Right cardiac atrium (tissue), 5 donors: ENCODE measurements at regions of chr16 and their contacts with region 1.

Region 1: DNA sequence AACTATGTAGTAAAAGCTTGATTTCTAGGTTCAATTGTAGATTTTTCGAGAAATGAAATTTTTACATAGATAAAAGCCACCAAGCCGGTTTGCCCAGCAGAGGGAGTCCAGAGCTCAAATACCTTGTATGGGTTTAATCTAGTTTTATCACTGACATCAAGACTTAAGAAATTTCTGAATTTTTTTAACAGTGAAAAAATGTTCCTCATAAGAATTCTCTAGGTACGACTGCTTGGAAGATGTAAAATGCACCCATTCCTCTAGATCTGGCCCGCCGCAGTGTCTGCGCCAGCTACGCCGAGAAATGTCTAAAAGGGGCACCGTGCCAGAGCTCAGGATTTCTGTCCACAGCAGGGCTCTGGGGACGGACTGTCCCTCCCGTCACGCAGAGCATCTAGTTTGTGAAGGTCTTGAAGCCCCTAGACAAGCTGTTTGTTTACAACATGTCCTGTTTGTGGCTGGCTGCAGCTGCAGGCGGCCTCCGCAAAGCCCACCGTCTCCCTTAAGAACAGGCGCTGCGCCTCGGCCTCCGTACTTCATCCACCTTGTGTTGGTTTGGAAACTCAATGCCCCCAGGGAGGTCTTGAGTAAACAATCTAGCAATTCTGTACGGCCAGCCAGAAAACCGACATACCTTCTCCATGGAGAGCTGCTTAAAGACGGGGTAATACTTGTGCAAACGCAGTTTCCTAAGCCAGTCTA is 24.8 kb downstream of the MAP1LC3B start:
- DNase-seq: peak in 2 of 3 donors; percentile 50 to 82
- ATAC-seq: no peak
- H3K4me3 ChIP-seq: no peak overlapping the region
- H3K27ac ChIP-seq: no peak overlapping the region
- H3K4me1 ChIP-seq: no peaks in the 10 kb centered on the region
- H3K27me3 ChIP-seq: no peaks in the 10 kb centered on the region

Region 2: DNA sequence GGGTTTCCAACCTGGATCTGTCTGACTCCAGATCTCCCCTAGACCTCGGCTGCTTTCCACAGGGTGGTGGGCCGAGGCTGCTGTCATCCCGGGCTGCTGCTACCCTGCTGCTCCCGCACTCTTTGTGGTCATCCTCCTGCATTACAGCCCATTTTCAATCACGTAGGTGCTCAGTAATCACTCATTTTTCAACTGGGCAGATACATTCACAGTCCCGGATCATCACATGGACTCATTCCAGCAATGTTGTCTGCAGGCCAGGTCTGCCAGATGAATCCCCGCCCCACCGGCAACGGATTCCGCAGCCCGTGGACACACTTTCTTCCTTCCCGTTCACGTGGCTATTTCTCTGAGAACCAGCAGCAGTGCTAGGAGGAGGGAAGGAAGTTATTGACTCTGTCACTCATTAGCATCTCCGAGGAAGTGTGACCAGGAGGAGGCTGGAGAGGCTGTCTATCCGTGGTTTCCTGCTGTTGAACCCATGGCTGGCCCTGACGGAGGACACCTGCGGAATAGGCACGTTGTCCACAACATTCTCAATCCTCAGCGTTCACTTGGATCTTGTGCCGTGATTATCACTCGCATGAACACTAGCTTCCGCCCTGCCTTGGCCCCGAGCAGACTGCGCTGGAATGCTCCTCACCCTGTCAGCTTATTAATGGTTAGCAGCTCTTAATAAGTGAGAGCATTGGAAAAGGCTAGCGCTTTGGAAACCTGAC is 90.5 kb after region 1 on chr16:
- intact Hi-C with region 1: loop called in 1 of 4 experiments (anchors 10 kb)
- DNase-seq: peak in 2 of 3 donors; percentile 53 to 58
- ATAC-seq: peak; percentile 66 to 71
- H3K4me3 ChIP-seq: no peak overlapping the region
- H3K27ac ChIP-seq: no peak overlapping the region
- H3K4me1 ChIP-seq: no peaks in the 10 kb centered on the region
- H3K27me3 ChIP-seq: no peaks in the 10 kb centered on the region

Region 3: GRCh38 chr16:87540945-87541877 is 124.2 kb after region 1 on chr16:
- intact Hi-C with region 1: loop called in 3 of 4 experiments (anchors 2 to 10 kb)
- DNase-seq: peak; percentile 74 to 82 (median 81)
- ATAC-seq: peak; percentile 79 to 87
- H3K4me3 ChIP-seq: peak overlapping the region; percentile 12
- H3K27ac ChIP-seq: peak overlapping the region; percentile 26
- H3K4me1 ChIP-seq: no peaks in the 10 kb centered on the region
- H3K27me3 ChIP-seq: no peaks in the 10 kb centered on the region

Region 4: GRCh38 chr16:87636072-87636684 is 219.2 kb after region 1 on chr16:
- intact Hi-C with region 1: loop called in 1 of 4 experiments (anchors 5 kb)
- DNase-seq: peak; percentile 87 to 94 (median 94)
- ATAC-seq: peak; percentile 92 to 95
- H3K4me3 ChIP-seq: no peak overlapping the region
- H3K27ac ChIP-seq: no peak overlapping the region
- H3K4me1 ChIP-seq: no peaks in the 10 kb centered on the region
- H3K27me3 ChIP-seq: no peaks in the 10 kb centered on the region